ENCODE measurements at regions of chr6 and their contacts with region 1.

Region 1: DNA sequence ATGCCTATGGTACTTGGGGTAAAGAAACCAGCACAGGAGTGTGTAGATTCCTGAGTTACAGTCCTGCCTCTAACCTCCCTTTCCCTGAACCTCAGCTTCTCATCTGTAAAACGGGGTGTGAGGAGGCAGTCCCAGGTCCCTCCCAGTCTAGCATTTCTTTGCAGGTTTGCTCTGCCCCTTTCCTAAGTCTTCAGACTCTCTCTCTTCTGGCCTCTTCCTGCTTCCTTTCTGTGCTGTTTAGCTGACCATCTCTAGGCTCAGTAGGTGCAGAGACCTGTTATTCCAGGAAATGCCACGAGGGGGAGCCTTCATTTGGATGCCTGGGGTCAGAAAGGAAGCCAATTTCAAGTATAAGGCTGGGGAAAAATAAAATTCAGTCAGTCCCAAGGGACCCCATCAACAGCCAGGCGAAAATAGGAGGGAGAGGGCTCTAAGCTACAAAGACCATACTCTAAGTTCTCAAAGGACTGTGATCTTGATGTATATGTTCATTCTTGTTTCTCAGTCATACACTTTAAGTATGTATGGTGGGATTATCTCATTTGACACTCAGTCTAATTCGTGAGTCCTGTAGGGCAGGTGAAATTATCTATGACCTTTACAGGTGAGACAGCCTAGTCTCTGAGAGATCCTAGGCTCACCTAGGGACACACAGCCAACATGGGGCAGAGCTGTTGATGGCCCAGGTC is 89.1 kb downstream of the NCR2 start:
- DNase-seq: peak; percentile 53
- ATAC-seq: peak; percentile 79
- H3K4me3 ChIP-seq: no peak overlapping the region
- H3K27ac ChIP-seq: no peak overlapping the region
- H3K4me1 ChIP-seq: peaks cover 17% of the 10 kb centered on the region
- H3K27me3 ChIP-seq: peaks cover 15% of the 10 kb centered on the region
- CTCF ChIP-seq: peak; percentile 90

Region 2: GRCh38 chr6:41439524-41440418 is 15.3 kb after region 1 on chr6:
- CTCF ChIA-PET with region 1: no interaction called
- POLR2A ChIA-PET with region 1: no interaction called
- in situ Hi-C with region 1: no loop called
- intact Hi-C with region 1: no loop called
- DNase-seq: no peak
- ATAC-seq: no peak
- H3K4me3 ChIP-seq: no peak overlapping the region
- H3K27ac ChIP-seq: no peak overlapping the region
- H3K4me1 ChIP-seq: no peaks in the 10 kb centered on the region
- H3K27me3 ChIP-seq: peaks cover 3% of the 10 kb centered on the region; the same call in 1 of the 2 replicates
- CTCF ChIP-seq: no peak

Region 3: GRCh38 chr6:41545703-41546474 is 121.4 kb after region 1 on chr6 and contains the start of gene FOXP4:
- CTCF ChIA-PET with region 1: no interaction called
- POLR2A ChIA-PET with region 1: no interaction called
- in situ Hi-C with region 1: no loop called
- intact Hi-C with region 1: loop called (anchors 5 kb)
- DNase-seq: peak; percentile 76
- ATAC-seq: peak; percentile 93
- H3K4me3 ChIP-seq: peak within 1 kb of the TSS; percentile 83 to 84
- H3K27ac ChIP-seq: peak within 1 kb of the TSS; percentile 86
- H3K4me1 ChIP-seq: no peaks in the 10 kb centered on the region
- H3K27me3 ChIP-seq: no peaks in the 10 kb centered on the region
- CTCF ChIP-seq: no peak
- total RNA-seq, gene FOXP4: 30.4 TPM

Region 4: DNA sequence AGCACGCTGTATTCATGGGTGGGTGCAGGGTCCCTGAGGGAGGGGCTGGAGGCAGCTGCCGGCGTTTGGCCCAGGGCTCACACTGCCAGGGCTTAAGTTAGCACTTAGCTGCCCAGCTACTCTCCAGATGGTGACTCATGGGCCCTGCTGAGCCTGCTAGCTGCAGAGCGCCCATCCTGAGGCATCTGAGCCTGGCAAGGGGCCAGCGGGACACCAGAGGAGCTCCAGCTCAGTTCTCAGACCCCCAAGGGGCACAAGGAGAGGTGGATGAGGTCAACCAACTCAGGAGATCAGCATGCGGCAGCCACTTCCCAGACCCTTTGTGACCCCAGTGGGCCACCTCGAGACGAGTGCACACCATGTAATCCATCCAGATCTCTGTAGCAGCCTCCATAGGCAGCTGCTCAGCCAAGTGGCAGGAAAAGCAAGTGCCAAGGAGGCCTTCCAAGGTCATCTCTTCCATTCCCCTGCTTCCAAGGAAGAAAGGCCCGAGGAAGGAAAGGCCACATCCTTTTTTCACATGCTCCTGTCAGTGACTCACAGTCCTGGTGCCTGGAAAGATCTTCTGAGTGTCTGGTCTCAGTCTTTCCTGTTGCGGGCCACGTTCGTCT is 157.0 kb after region 1 on chr6:
- CTCF ChIA-PET with region 1: interaction called, 3 read pairs
- POLR2A ChIA-PET with region 1: interaction called, 21 read pairs
- in situ Hi-C with region 1: no loop called
- intact Hi-C with region 1: no loop called
- DNase-seq: no peak
- ATAC-seq: peak; percentile 54; the same call in 1 of the 2 replicates
- H3K4me3 ChIP-seq: no peak overlapping the region
- H3K27ac ChIP-seq: no peak overlapping the region
- H3K4me1 ChIP-seq: peaks cover 14% of the 10 kb centered on the region
- H3K27me3 ChIP-seq: no peaks in the 10 kb centered on the region
- CTCF ChIP-seq: no peak

Region 5: GRCh38 chr6:41591859-41592502 is 167.5 kb after region 1 on chr6:
- CTCF ChIA-PET with region 1: interaction called, 4 read pairs
- POLR2A ChIA-PET with region 1: no interaction called
- in situ Hi-C with region 1: no loop called
- intact Hi-C with region 1: loop called (anchors 1 kb)
- DNase-seq: peak; percentile 46
- ATAC-seq: peak; percentile 82
- H3K4me3 ChIP-seq: no peak overlapping the region
- H3K27ac ChIP-seq: no peak overlapping the region
- H3K4me1 ChIP-seq: no peaks in the 10 kb centered on the region
- H3K27me3 ChIP-seq: no peaks in the 10 kb centered on the region
- CTCF ChIP-seq: peak; percentile 95

Measured in Panc1 (cell line).